Activated CD4-positive, alpha-beta T cell treated with anti-CD3 and anti-CD28 coated beads for 36 hours (primary cell): ENCODE measurements at regions of chr19 and their contacts with region 1.

Region 1: DNA sequence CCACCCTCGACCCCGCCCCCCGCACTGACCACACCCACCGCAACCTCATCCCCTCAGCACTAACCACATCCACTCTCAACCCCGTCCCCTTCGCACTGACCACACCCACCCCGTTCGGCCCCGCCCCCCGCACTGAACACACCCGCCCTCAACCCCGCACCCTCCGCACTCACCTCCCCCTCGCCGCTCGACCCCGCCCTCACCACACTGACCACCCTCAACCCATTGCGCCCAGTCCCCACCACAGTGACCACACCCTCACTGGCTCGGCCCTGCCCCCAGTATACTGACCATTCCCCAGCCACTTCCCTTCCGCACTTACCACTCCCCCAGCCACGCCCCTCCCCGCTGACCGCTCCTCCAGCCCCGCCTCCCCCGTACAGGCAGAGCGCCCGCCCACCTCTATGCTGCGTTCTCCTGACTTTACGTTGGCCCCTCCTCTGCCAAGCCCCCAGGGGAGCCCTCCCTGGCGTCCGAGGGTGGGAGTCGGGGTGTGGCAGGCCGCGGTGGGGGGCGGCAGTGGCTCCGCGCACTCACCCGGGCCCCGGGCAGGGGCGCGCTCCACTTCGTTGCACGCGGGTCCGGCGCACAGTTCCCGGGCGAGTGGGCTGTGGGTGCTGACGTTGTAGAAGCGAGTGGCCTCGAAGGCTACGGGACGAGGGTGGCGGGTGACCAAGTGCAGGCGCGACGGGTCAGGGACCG is 8.5 kb downstream of the F2RL3 start:
- DNase-seq: peak; percentile 75
- ATAC-seq: peak; percentile 53
- H3K4me3 Mint-ChIP-seq: no peak overlapping the region
- H3K27ac Mint-ChIP-seq: no peak overlapping the region
- H3K4me1 Mint-ChIP-seq: peaks cover 16% of the 10 kb centered on the region
- H3K27me3 Mint-ChIP-seq: peaks cover 26% of the 10 kb centered on the region

Region 2: GRCh38 chr19:16470911-16471811 is 426.1 kb before region 1 on chr19:
- CTCF ChIA-PET with region 1: no interaction called
- POLR2A ChIA-PET with region 1: no interaction called
- intact Hi-C with region 1: loop called in 1 of 2 experiments (anchors 1 kb)
- DNase-seq: peak; percentile 60
- ATAC-seq: peak; percentile 20
- H3K4me3 Mint-ChIP-seq: peak overlapping the region; percentile 85
- H3K27ac Mint-ChIP-seq: peak overlapping the region; percentile 72
- H3K4me1 Mint-ChIP-seq: peaks cover 37% of the 10 kb centered on the region
- H3K27me3 Mint-ChIP-seq: peaks cover 2% of the 10 kb centered on the region

Region 3: GRCh38 chr19:16628183-16628983 is 268.9 kb before region 1 on chr19 and contains the start of gene MED26:
- CTCF ChIA-PET with region 1: no interaction called
- POLR2A ChIA-PET with region 1: no interaction called
- intact Hi-C with region 1: loop called in 1 of 2 experiments (anchors 1 kb)
- DNase-seq: peak; percentile 98
- ATAC-seq: peak; percentile 92
- H3K4me3 Mint-ChIP-seq: peak within 1 kb of the TSS; percentile 87
- H3K27ac Mint-ChIP-seq: peak within 1 kb of the TSS; percentile 100
- H3K4me1 Mint-ChIP-seq: peaks cover 39% of the 10 kb centered on the region
- H3K27me3 Mint-ChIP-seq: no peaks in the 10 kb centered on the region
- total RNA-seq, gene MED26: 13.6 to 14.5 TPM

Region 4: GRCh38 chr19:16829010-16829821 is 68.1 kb before region 1 on chr19 and contains the start of gene SIN3B:
- CTCF ChIA-PET with region 1: no interaction called
- POLR2A ChIA-PET with region 1: no interaction called
- intact Hi-C with region 1: loop called in 1 of 2 experiments (anchors 1 kb)
- DNase-seq: peak; percentile 93
- ATAC-seq: peak; percentile 91
- H3K4me3 Mint-ChIP-seq: peak within 1 kb of the TSS; percentile 79
- H3K27ac Mint-ChIP-seq: peak within 1 kb of the TSS; percentile 82
- H3K4me1 Mint-ChIP-seq: peaks cover 38% of the 10 kb centered on the region
- H3K27me3 Mint-ChIP-seq: peaks cover 20% of the 10 kb centered on the region
- total RNA-seq, gene SIN3B: 27.6 to 28.5 TPM

Region 5: GRCh38 chr19:17235618-17236377 is 338.5 kb after region 1 on chr19:
- CTCF ChIA-PET with region 1: no interaction called
- POLR2A ChIA-PET with region 1: no interaction called
- intact Hi-C with region 1: loop called in 1 of 2 experiments (anchors 2 kb)
- DNase-seq: peak; percentile 87
- ATAC-seq: peak; percentile 85
- H3K4me3 Mint-ChIP-seq: peak overlapping the region; percentile 79
- H3K27ac Mint-ChIP-seq: peak overlapping the region; percentile 65
- H3K4me1 Mint-ChIP-seq: peaks cover 9% of the 10 kb centered on the region
- H3K27me3 Mint-ChIP-seq: no peaks in the 10 kb centered on the region